Head of caudate nucleus (tissue), 42 donors: ENCODE measurements at regions of chr20 and their contacts with region 1.

Region 1: DNA sequence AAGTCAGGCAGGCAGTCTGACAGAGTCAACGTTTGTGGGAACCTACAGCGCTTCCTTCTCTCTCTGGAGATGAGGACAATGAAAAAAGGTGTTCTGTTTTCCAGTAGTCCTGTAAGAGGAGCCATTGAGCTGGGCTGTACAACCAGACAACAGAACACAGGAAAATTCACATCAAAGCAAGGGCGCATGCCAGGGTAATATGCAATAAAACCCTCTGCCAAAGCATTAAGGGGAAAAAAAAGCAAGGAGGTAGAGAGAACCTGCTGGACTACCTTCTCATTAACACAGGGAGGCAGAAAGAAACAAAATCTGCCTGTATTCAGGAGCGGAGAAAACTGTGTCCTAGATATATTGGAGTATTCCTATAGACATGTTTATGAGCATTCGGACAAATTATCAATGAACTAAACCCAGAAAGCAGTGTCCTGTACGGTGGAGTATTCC is 1.3 kb downstream of the RNF24 start:
- DNase-seq: peak in 20 of 42 donors; percentile 9 to 73 (median 43)

Region 2: DNA sequence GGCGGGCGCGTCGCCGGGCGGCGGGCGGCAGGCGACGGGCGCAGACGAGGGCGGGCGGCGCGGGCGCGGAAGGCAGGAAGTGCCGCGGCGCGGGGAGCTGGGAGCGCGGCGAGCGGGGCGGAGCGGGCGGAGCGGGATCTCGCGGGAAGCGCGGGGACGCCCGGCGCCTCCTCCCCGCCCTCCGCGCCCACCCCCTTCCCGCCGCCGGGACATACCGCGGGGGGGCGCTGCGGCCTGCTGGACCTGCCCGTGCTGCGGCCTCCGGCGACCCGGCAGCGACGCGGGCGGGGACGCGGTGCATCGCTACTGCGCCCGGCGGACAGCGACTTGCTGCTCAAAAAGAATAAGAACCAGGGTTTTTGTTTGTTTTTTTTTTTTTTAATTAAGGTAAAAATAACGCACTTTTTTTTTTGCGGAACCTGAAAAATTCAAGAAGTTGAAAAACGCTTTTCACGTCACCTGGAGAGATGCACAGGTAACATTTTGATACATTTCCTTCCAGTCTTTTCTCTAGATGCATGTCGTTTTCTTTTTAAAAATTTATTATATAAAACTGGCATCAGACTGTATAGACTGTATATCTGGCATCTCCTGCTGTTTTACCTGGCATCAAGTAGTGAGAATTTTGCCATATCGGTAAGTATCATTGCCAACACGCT is 227.3 kb before region 1 on chr20 and contains the start of gene CENPB:
- intact Hi-C with region 1: loop called (anchors 10 kb)
- DNase-seq: peak; percentile 74 to 96 (median 92)

Region 3: DNA sequence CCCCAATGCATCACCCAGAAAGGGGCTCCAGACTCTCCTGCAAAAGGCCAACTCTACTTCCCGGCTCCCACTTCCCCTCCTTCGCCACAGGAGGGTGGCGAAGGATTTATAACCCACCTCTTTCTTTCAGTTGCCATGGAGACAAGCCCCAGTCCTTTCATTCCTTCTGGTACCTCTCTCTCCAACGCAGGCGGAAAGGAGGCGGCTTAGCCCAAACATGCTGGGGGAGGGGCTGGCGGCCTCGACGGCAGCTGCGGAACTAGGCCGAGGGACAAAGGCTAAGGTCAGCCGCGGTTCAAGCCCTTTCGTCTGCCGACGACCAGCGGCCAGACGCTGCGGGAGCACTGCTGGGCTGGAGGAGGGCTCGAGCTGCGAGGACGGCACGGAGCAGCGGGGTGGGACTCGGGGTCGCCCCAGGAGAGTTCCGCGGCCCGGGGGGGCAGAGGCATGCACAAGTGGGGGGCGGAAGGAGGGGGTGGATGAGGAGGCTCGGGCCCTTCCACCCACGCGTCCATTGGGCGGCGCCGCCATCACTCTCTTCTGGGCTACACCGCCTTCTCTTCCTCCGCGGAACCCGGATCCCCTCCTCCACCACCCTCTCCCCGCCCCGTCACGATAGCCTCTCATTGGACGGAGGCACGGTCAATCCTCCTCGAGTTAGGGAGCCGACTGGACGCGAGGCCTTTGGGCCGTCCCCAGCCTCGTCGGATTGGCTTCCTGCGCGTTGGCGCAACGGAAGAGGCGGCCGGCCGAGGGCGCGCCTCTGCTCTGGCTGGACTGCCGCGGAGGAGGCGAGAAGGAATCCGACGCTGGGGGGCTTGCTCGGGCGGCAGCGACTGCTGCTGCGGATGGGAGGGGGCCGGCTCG is 125.2 kb before region 1 on chr20 and contains the start of gene PANK2:
- intact Hi-C with region 1: loop called (anchors 5 kb)
- DNase-seq: peak; percentile 97 to 100 (median 99)

Region 4: DNA sequence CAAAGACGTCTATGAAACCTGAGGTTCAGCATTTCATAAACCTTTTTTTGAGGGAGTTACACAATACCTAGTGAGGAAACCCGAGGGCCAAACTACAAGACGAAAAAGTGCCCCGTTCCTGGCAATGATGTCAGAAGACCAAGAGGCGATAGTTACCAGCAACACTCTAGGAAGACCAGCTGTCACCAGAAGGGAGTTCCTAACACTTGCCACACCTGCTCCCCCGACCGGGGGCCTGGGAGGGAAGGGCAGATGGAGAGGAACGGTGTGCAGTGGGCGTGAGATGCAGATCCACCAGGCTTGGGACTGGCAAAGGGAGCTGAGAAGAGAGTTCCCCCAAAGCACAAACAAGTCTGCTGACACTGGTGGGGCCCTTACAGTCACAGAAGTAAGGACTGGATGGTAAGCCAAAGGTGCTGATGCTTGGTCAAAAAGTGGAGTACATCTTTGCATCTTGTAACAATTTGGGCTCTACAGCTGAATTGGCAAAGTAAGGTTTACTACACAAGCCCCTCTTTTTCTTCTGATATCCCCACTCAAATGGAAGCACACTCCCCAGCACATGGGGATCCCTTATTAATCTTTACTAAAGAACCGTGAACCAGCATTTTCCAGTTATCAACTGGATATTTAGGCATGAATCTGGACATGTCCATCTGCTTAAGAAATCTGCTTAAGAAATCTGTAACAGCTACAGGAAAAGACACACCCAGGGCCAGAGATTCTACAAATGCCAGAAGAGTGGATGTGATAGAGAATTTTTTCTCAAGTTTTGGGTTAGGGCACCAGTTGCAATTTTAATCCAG is 86.4 kb before region 1 on chr20:
- intact Hi-C with region 1: loop called (anchors 10 kb)
- DNase-seq: peak in 1 of 42 donors; percentile 18

Region 5: GRCh38 chr20:4089756-4090487 is 75.9 kb after region 1 on chr20:
- intact Hi-C with region 1: loop called (anchors 5 kb)
- DNase-seq: peak in 1 of 42 donors; percentile 43